ENCODE measurements at regions of chr7 and their contacts with region 1.

Region 1: DNA sequence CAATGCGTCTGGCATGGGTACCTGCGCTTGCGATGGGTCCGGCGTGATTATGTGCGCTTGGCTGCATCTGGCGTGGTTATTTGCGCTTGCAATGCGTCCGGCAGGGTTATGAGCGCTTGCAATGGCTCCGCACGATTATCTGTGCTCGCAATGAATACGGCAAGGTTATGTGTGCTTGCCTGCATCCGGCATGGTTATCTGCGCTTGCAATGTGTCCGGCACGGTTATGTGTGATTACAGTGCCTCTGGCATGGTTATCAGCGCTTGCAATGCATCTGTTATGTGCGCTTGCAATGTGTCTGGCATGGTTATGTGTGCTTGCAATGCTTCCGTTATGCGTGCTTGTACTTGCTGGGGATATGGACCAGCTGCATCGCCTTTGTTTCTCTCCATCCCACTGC is 37.7 kb downstream of the RBAK start:
- DNase-seq: no peak
- ATAC-seq: no peak
- H3K4me3 ChIP-seq: no peak overlapping the region
- H3K27ac ChIP-seq: no peak overlapping the region
- H3K4me1 ChIP-seq: no peaks in the 10 kb centered on the region
- H3K27me3 ChIP-seq: no peaks in the 10 kb centered on the region
- CTCF ChIP-seq: no peak

Region 2: GRCh38 chr7:4797858-4798705 is 285.2 kb before region 1 on chr7:
- intact Hi-C with region 1: loop called in 2 of 3 experiments (anchors 5 to 10 kb)
- DNase-seq: peak in 4 of 6 donors; percentile 59 to 86 (median 68)
- ATAC-seq: peak; percentile 68 to 93 (median 86)
- H3K4me3 ChIP-seq: no peak overlapping the region
- H3K27ac ChIP-seq: no peak overlapping the region
- H3K4me1 ChIP-seq: no peaks in the 10 kb centered on the region
- H3K27me3 ChIP-seq: no peaks in the 10 kb centered on the region
- CTCF ChIP-seq: peak; percentile 62 to 81 (median 76)

Region 3: GRCh38 chr7:4809091-4809591 is 274.2 kb before region 1 on chr7:
- intact Hi-C with region 1: loop called in 1 of 3 experiments (anchors 10 kb)
- DNase-seq: peak in 1 of 6 donors; percentile 65
- ATAC-seq: peak in 1 of 4 donors; percentile 20
- H3K4me3 ChIP-seq: no peak overlapping the region
- H3K27ac ChIP-seq: no peak overlapping the region
- H3K4me1 ChIP-seq: no peaks in the 10 kb centered on the region
- H3K27me3 ChIP-seq: no peaks in the 10 kb centered on the region
- CTCF ChIP-seq: no peak

Region 4: DNA sequence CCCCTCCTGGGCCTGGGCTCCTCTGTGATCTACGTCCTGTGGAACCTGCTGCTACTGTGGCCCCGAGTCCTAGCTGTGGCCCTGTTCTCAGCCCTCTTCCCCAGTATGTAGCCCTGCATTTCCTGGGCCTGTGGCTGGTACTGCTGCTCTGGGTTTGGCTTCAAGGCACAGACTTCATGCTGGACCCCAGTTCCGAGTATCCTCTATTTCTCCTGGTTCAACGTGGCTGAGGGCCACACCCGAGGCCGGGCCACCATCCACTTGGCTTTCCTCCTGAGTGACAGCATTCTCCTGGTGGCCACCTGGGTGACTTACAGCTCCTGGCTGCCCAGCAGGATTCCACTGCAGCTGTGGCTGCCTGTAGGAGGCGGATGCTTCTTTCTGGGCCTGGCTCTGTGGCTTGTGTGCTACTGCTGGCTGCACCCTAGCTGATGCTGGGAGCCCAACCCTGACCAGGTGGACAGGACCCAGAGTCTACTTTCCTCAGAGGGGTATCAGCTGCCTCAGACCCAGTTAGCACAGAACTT is 86.6 kb before region 1 on chr7:
- intact Hi-C with region 1: no loop called
- DNase-seq: no peak
- ATAC-seq: no peak
- H3K4me3 ChIP-seq: no peak overlapping the region
- H3K27ac ChIP-seq: no peak overlapping the region
- H3K4me1 ChIP-seq: no peaks in the 10 kb centered on the region
- H3K27me3 ChIP-seq: no peaks in the 10 kb centered on the region
- CTCF ChIP-seq: no peak

Measured in pancreas (tissue), 10 donors.